ENCODE measurements at regions of chr4 and their contacts with region 1.

Region 1: GRCh38 chr4:71913275-71913674 is 118.5 kb upstream of the NPFFR2 start:
- DNase-seq: no peak
- H3K4me3 ChIP-seq: no peak overlapping the region
- CTCF ChIP-seq: no peak

Region 2: DNA sequence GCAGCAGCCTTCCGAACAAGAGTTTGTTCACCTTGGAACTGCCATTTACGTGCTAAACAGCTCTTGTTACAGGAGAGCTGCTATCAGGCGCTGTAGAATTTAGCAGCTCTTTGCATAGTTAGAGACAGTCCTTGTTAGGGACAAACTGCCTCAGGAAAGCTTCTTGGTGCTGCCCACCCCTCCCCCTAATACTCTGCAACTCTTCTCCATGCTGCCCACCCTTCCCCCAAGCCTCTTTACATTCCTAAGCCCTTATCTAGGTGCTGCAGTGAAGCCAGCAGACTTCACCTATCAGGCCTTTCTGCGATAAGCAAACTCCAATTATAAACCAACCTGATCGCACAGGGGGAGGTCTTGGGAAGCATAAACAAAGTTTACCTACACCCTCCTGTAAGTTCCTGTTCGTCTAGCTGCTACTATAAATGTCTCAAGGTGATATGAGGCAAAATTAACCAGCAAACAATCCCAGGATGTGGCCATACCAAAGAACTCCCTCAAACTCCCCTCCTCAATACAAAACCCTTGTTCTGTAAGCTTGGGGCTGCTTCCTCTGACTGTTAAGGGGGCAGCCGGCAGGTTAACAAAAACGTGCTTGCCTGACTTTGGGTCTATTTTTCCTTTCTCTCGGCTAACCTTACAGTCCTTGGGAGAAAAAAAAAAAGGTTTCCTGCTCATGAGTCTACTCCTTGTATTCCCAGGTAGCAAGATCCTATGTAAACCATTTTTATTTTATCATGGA is 55.4 kb before region 1 on chr4:
- in situ Hi-C with region 1: loop called (anchors 5 kb)
- DNase-seq: no peak
- H3K4me3 ChIP-seq: no peak overlapping the region
- CTCF ChIP-seq: no peak

Region 3: DNA sequence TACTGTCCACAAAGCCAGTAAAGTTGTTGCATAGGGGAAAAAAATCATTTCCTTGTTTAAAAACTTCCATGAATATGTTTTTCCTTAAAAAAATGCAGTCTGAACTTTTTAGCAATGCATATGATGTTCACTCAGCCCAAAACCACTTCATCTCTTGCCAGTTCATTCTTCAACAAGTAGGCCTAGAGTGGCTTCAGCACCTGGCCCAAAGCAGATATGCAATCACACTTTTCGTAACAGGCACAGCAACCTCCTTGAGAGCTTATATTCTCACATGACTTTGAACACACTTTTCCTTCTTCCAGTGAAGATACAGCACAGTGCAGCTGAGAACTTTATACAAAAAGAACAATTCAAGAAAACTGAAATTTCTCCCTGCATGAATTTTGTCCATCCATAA is 527.1 kb after region 1 on chr4:
- in situ Hi-C with region 1: no loop called
- DNase-seq: no peak
- H3K4me3 ChIP-seq: no peak overlapping the region
- CTCF ChIP-seq: no peak